Esophagus muscularis mucosa (tissue), 4 donors: ENCODE measurements at regions of chr14 and their contacts with region 1.

Region 1: DNA sequence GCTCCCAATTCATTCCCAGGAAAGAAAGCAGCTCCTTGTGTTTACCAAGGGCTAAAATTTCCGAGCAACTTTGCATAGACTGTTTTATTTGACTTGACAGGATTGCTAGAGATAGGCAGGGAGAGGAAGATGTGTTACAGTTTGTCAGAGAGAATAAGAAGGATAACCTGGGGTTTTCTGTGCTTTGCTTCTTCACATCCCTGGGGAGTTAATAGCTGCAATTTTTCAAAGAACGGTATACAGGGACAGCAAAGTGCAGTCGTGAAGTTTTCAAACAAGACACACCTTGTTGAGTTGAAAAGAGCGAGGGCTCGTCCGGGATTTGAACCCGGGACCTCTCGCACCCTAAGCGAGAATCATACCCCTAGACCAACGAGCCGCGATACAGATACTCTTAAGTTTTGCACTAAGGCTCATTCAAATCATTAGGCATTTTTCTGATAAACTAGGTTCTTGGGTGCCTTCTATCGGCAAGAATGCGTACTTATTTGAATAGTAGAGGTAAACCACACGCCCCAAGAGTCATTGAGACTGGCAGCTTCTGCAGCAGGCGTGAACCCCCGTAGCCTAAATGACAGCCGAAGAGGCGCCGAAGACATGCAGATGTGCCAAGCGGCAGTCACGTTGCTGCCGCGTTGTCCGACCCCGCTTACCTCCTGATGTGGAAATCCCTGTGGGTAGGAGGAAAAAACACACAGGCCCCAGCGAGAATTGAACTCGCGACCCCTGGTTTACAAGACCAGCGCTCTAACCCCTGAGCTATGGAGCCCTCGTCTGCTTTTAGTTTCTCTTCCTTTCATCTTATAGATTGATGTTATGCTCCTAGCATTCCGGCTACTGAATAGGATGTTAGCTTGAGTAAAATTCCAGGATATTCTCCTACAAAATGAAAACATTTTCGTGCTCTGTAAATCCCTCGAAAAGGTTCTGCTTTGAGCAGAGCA is 22.2 kb upstream of the RNASE12 start:
- DNase-seq: peak; percentile 97
- H3K4me3 ChIP-seq: peak overlapping the region; percentile 51 to 68 (median 57)
- H3K27ac ChIP-seq: peak overlapping the region; percentile 74 to 83 (median 78)
- H3K4me1 ChIP-seq: peaks cover 4 to 45% (median 30%) of the 10 kb centered on the region in 4 donors
- H3K27me3 ChIP-seq: no peaks in the 10 kb centered on the region
- CTCF ChIP-seq: peak; percentile 68 to 89 (median 84)
- EP300 ChIP-seq: no peak
- POLR2A ChIP-seq: no peak

Region 2: GRCh38 chr14:20327005-20327869 is 286.1 kb before region 1 on chr14:
- intact Hi-C with region 1: loop called (anchors 5 kb)
- DNase-seq: no peak
- H3K4me3 ChIP-seq: no peak overlapping the region
- H3K27ac ChIP-seq: peak overlapping the region; percentile 7 to 50 (median 44)
- H3K4me1 ChIP-seq: peaks cover 15 to 47% (median 43%) of the 10 kb centered on the region in 4 donors
- H3K27me3 ChIP-seq: no peaks in the 10 kb centered on the region
- CTCF ChIP-seq: peak; percentile 72 to 79 (median 78)
- EP300 ChIP-seq: no peak
- POLR2A ChIP-seq: no peak

Region 3: DNA sequence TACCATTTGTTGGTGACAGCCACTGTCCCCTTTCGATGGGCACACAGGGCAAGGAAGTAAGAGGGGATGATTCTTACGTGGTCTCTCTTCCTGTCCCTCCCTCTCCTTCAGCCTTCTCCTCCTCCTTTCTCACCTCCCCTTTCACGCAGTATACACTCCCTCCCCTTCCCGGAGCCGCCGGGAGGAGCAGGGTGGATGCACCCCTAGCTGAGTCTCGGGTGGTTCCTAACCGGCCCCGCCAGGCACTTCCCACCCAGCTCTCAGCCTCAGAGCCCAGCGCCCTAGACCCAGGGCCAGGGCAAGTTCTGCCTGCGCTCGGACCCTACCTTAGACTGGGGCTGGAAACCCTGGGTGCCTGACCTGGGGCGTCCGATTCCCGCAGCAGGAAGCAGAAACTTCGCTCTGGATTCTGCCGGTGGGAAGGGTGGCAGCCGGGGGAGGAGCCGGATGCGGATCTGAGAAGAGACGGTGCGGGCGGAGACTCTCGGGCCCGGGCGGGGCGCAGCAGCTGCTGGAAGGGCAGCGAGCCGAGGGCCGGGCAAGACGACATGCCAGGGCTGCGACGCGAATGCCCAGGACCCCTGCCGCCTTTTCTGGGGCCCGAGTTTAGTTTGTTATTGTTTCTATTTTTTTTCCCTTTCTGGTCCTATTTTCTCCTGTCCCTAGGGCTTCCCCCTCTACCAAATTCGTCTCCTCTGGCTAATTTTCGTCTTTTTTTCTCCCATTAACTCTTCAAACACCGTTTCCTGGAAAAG is 200.1 kb before region 1 on chr14 and contains the start of gene TEP1:
- intact Hi-C with region 1: loop called (anchors 5 kb)
- DNase-seq: peak; percentile 96
- H3K4me3 ChIP-seq: peak within 1 kb of the TSS; percentile 68 to 93 (median 84)
- H3K27ac ChIP-seq: peak within 1 kb of the TSS; percentile 88 to 99 (median 98)
- H3K4me1 ChIP-seq: peaks cover 16 to 27% (median 26%) of the 10 kb centered on the region in 4 donors
- H3K27me3 ChIP-seq: no peaks in the 10 kb centered on the region
- CTCF ChIP-seq: no peak
- EP300 ChIP-seq: no peak
- POLR2A ChIP-seq: peak; percentile 67
- total RNA-seq, gene TEP1: 17.2 to 28.8 (median 22.9) TPM

Region 4: GRCh38 chr14:20530771-20531571 is 82.4 kb before region 1 on chr14:
- intact Hi-C with region 1: loop called (anchors 5 kb)
- DNase-seq: peak; percentile 93
- H3K4me3 ChIP-seq: no peak overlapping the region
- H3K27ac ChIP-seq: no peak overlapping the region
- H3K4me1 ChIP-seq: peaks cover 0 to 5% (median 0%) of the 10 kb centered on the region in 4 donors
- H3K27me3 ChIP-seq: peaks cover 0 to 14% (median 0%) of the 10 kb centered on the region in 4 donors
- CTCF ChIP-seq: peak; percentile 43 to 70 (median 64)
- EP300 ChIP-seq: no peak
- POLR2A ChIP-seq: no peak